GM12878 (cell line): ENCODE measurements at regions of chr7 and their contacts with region 1.

Region 1: DNA sequence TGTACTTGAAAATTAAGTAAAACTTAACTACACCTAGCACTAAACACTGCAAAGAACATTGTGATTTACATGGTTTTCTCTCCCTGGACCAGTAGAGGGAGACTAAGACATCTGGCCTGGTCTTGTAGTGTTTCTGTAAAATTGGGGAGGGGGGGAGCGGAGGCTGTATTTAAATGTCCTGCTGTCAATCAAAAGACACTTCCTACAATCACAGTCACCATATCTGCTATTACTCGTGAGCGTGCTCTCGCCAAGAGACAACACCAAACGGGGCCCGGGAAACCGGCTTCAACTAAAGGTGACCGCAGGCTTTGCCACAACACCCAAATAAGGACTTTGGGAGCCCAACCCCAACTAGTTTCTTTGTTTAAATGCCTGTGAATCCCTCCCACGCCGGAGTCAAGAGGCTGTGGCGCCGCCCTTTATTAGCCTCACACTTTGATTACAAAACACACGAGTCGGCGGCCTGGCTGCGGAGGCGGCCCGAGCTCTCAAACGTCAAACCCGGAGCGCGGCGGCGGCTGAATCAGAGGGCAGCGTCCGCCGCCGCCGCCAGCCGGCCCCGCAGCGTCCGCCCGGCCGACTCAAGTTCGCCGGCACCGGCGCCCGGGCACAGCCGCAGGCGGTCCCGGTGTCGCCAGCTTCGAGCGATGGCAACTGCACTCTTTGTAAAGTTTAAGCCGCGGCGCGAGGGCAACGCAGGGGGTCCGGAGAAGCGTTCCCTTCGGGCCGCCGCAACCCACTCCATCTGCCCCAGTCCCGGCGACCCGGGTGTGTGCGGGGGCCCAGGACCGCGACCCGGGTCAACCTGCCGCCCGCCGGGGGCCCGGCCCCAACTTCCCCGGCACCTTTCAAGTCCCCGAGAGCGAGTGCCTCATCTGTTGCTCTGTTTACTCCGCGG is 1.3 kb downstream of the KDM7A start:
- DNase-seq: peak; percentile 84
- ATAC-seq: peak; percentile 77
- H3K4me3 ChIP-seq: peak overlapping the region; percentile 77
- H3K27ac ChIP-seq: no peak overlapping the region
- H3K4me1 ChIP-seq: 0 out of 2 replicates have a peak, but pooled peaks cover 4% of the 10 kb centered on the region
- H3K27me3 ChIP-seq: peaks cover 0 to 4% of the 10 kb centered on the region in 2 experiments; a peak in 2 of 4 replicates
- CTCF ChIP-seq: peak; percentile 78 to 88 (median 85)
- EP300 ChIP-seq: no peak
- POLR2A ChIP-seq: peak; percentile 55
- RAD21 ChIP-seq: peak; percentile 97

Region 2: GRCh38 chr7:140010194-140010895 is 165.1 kb before region 1 on chr7:
- CTCF ChIA-PET with region 1: no interaction called
- POLR2A ChIA-PET with region 1: no interaction called
- RAD21 ChIA-PET with region 1: no interaction called
- SMC1A ChIA-PET with region 1: no interaction called
- in situ Hi-C with region 1: no loop called
- intact Hi-C with region 1: no loop called
- DNase-seq: no peak
- ATAC-seq: no peak
- H3K4me3 ChIP-seq: no peak overlapping the region
- H3K27ac ChIP-seq: no peak overlapping the region
- H3K4me1 ChIP-seq: no peaks in the 10 kb centered on the region
- H3K27me3 ChIP-seq: no peaks in the 10 kb centered on the region; a peak in 2 of 4 replicates
- CTCF ChIP-seq: no peak
- EP300 ChIP-seq: no peak
- POLR2A ChIP-seq: no peak
- RAD21 ChIP-seq: no peak

Region 3: GRCh38 chr7:140209866-140210609 is 34.6 kb after region 1 on chr7:
- CTCF ChIA-PET with region 1: interaction called, 3 read pairs
- POLR2A ChIA-PET with region 1: interaction called, 5 read pairs
- RAD21 ChIA-PET with region 1: interaction called, 5 read pairs
- SMC1A ChIA-PET with region 1: interaction called, 3 read pairs
- in situ Hi-C with region 1: no loop called
- intact Hi-C with region 1: loop called (anchors 1 kb)
- DNase-seq: peak; percentile 85
- ATAC-seq: peak; percentile 96
- H3K4me3 ChIP-seq: peak overlapping the region; percentile 24; the same call in 1 of the 2 replicates
- H3K27ac ChIP-seq: peak overlapping the region; percentile 78
- H3K4me1 ChIP-seq: peaks cover 58% of the 10 kb centered on the region
- H3K27me3 ChIP-seq: peaks cover 0 to 8% of the 10 kb centered on the region in 2 experiments
- CTCF ChIP-seq: no peak
- EP300 ChIP-seq: peak; percentile 75 to 95; a peak in 3 of 4 replicates
- POLR2A ChIP-seq: no peak; the same call in 1 of the 2 replicates
- RAD21 ChIP-seq: 0 out of 2 replicates have a peak, but pooled peaks have one; percentile 24

Region 4: DNA sequence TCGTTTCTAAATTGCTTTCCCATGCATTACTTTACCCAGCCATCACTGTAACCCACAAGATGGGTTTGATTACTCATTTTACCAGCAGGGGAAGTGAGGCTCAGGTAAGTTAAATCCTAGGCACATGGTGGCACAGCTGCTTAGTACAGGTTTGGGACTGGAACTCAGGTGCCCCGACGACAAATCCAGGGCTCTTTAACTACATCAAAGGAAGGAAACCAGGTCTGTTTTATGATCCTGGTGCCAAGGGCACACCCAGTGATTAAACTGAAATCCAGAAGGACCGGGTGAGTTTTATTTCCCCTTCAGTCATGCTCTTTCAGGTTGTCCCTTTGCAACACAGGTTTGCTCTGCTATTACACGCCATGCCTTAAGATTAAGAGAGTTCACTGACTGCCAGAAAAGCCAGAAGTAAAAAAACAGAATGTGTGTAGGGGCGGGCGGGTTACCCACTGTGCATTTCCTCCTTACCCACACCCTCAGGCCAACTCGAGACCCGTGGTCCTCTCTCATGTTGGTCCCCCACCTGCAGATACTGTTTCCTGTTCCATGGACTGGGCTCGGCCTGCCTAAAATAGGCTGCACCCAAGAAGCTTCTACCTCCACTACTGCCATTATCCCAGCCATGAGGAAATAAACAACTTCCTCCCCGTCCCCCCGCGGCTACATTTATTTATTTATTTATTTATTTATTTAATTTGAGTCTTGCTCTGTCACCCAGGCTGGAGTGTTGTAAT is 56.5 kb after region 1 on chr7:
- CTCF ChIA-PET with region 1: interaction called, 3 read pairs
- POLR2A ChIA-PET with region 1: no interaction called
- RAD21 ChIA-PET with region 1: no interaction called
- SMC1A ChIA-PET with region 1: no interaction called
- in situ Hi-C with region 1: no loop called
- intact Hi-C with region 1: loop called (anchors 2 kb)
- DNase-seq: no peak
- ATAC-seq: no peak
- H3K4me3 ChIP-seq: peak overlapping the region; percentile 62; the same call in 1 of the 2 replicates
- H3K27ac ChIP-seq: no peak overlapping the region
- H3K4me1 ChIP-seq: peaks cover 33% of the 10 kb centered on the region
- H3K27me3 ChIP-seq: peaks cover 5 to 10% of the 10 kb centered on the region in 2 experiments; a peak in 3 of 4 replicates
- CTCF ChIP-seq: no peak
- EP300 ChIP-seq: no peak
- POLR2A ChIP-seq: no peak
- RAD21 ChIP-seq: no peak

Region 5: GRCh38 chr7:140242057-140243031 is 66.9 kb after region 1 on chr7:
- CTCF ChIA-PET with region 1: no interaction called
- POLR2A ChIA-PET with region 1: no interaction called
- RAD21 ChIA-PET with region 1: no interaction called
- SMC1A ChIA-PET with region 1: no interaction called
- in situ Hi-C with region 1: no loop called
- intact Hi-C with region 1: loop called (anchors 1 kb)
- DNase-seq: peak; percentile 56
- ATAC-seq: peak; percentile 93
- H3K4me3 ChIP-seq: no peak overlapping the region
- H3K27ac ChIP-seq: no peak overlapping the region
- H3K4me1 ChIP-seq: peaks cover 13% of the 10 kb centered on the region
- H3K27me3 ChIP-seq: peaks cover 3 to 6% of the 10 kb centered on the region in 2 experiments; a peak in 3 of 4 replicates
- CTCF ChIP-seq: no peak
- EP300 ChIP-seq: no peak
- POLR2A ChIP-seq: no peak
- RAD21 ChIP-seq: no peak

Region 6: GRCh38 chr7:140275069-140275965 is 99.8 kb after region 1 on chr7:
- CTCF ChIA-PET with region 1: no interaction called
- POLR2A ChIA-PET with region 1: no interaction called
- RAD21 ChIA-PET with region 1: no interaction called
- SMC1A ChIA-PET with region 1: no interaction called
- in situ Hi-C with region 1: no loop called
- intact Hi-C with region 1: no loop called
- DNase-seq: no peak
- ATAC-seq: no peak
- H3K4me3 ChIP-seq: no peak overlapping the region
- H3K27ac ChIP-seq: no peak overlapping the region
- H3K4me1 ChIP-seq: no peaks in the 10 kb centered on the region
- H3K27me3 ChIP-seq: no peaks in the 10 kb centered on the region; a peak in 1 of 4 replicates
- CTCF ChIP-seq: no peak
- EP300 ChIP-seq: no peak
- POLR2A ChIP-seq: no peak
- RAD21 ChIP-seq: no peak

Region 7: DNA sequence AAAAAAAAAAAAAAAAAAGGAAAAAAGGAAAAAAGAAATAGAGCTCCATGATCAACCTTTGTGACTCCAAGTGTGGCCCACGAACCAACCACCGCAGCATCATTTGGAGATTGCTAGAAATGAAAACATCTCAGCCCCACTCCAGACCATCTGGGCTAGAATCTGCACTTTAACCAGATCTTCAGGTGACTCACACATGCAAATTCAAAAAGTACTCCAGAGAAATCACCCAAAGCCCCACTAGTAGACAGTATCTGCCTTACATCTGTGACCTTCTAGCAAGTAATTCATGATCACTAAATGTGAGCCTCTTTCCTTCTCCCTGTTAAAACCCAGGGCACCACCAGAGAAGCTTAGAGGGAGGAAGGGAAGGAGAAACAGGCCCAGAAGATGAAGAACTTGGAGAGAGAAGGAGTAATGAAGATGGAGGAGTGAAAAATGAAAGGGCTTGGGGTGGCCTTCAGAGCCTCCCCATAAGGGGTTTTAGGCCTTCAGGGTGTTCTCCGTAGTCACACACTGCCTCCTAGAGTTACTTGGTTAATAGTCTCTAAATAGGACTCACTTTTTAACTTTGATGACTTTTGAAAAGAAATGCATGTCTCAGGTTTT is 128.8 kb after region 1 on chr7:
- CTCF ChIA-PET with region 1: interaction called, 5 read pairs
- POLR2A ChIA-PET with region 1: no interaction called
- RAD21 ChIA-PET with region 1: no interaction called
- SMC1A ChIA-PET with region 1: interaction called, 7 read pairs
- in situ Hi-C with region 1: no loop called
- intact Hi-C with region 1: loop called (anchors 1 kb)
- DNase-seq: peak; percentile 11
- ATAC-seq: peak; percentile 81
- H3K4me3 ChIP-seq: no peak overlapping the region
- H3K27ac ChIP-seq: no peak overlapping the region
- H3K4me1 ChIP-seq: no peaks in the 10 kb centered on the region
- H3K27me3 ChIP-seq: no peaks in the 10 kb centered on the region; a peak in 2 of 4 replicates
- CTCF ChIP-seq: peak; percentile 33 to 54 (median 52); a peak in 4 of 6 replicates
- EP300 ChIP-seq: no peak
- POLR2A ChIP-seq: no peak
- RAD21 ChIP-seq: peak; percentile 69

Region 8: DNA sequence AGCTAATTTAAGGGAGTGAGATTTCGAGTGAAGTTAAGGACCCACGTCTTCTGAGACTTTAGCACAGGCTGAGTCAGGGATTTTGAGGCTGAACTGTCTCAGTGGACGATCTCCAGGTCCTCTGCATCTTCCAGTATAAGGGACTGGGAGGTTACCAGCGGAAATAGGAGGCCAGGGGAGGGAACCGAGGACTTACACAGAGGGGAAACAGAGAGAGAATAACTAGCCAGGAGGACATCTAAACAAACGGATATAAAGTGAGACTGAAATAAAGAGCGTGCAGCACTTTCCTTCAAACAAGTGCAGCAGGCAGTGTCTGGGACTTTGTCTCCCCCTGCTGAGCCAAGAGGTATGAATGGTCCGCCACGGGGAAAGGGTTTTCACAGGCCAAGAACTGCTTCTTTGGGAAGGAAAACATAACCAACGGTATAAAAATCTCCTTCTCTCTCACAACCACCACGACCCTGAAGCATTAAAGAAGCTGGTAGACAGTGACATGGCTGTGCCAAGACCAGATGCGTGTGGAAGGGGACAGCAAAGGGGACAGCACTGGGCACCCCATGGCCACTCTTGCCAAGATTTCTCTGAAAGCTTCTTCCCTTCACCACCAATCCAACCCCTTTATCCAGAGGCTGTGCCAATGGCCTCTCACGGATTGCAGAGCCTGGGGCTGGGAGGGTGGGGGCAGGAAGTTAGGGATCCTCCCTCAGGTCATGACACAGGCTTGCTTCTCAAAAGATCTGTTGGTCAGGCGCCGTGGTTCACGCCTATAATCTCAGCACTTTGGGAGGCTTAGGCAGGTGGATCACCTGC is 150.9 kb after region 1 on chr7:
- CTCF ChIA-PET with region 1: interaction called, 3 read pairs
- POLR2A ChIA-PET with region 1: no interaction called
- RAD21 ChIA-PET with region 1: interaction called, 3 read pairs
- SMC1A ChIA-PET with region 1: no interaction called
- in situ Hi-C with region 1: no loop called
- intact Hi-C with region 1: loop called (anchors 1 kb)
- DNase-seq: no peak
- ATAC-seq: peak; percentile 80
- H3K4me3 ChIP-seq: no peak overlapping the region
- H3K27ac ChIP-seq: no peak overlapping the region
- H3K4me1 ChIP-seq: no peaks in the 10 kb centered on the region
- H3K27me3 ChIP-seq: peaks cover 0 to 1% of the 10 kb centered on the region in 2 experiments; a peak in 1 of 4 replicates
- CTCF ChIP-seq: peak; percentile 62 to 68 (median 67); a peak in 5 of 6 replicates
- EP300 ChIP-seq: no peak
- POLR2A ChIP-seq: no peak
- RAD21 ChIP-seq: peak; percentile 84

Region 9: DNA sequence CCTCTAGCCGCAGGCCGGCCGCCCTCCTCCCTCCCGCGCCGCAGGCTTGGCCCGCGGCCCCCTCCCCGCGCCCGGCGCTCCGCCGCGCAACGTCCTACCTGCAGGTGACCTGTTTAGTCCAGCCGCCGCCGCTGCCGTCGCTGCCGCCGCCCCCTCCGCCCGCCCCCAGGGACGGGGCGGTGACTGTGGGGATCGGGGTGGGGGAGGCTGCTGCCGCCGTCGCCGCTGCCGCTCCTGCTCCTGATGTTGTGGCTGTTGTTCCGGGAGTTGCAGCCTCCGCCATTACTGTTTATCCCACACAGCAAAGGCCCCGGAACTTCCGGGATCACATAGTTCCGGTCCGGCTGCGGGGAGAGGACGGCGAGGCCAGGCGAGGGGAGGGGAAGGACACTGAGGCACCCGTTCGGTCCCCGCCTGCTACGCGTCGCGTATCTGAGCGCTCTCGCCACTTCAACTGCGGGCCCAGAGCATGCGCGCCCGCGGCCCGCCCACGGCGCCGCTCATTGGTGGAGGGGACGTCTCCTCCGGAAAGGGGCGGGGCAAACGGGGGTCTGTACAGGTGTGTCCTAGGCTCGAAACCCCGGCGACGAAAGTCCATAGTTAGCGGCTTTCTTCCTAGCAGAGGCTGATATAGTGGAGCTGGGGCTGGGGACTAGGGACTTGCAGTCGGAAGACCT is 303.7 kb after region 1 on chr7 and contains the start of gene MKRN1:
- CTCF ChIA-PET with region 1: interaction called, 3 read pairs
- POLR2A ChIA-PET with region 1: no interaction called
- RAD21 ChIA-PET with region 1: interaction called, 3 read pairs
- SMC1A ChIA-PET with region 1: no interaction called
- in situ Hi-C with region 1: no loop called
- intact Hi-C with region 1: loop called (anchors 5 kb)
- DNase-seq: peak; percentile 83
- ATAC-seq: peak; percentile 96
- H3K4me3 ChIP-seq: peak within 1 kb of the TSS; percentile 98
- H3K27ac ChIP-seq: peak within 1 kb of the TSS; percentile 76
- H3K4me1 ChIP-seq: peaks cover 13% of the 10 kb centered on the region
- H3K27me3 ChIP-seq: no peaks in the 10 kb centered on the region; a peak in 1 of 4 replicates
- CTCF ChIP-seq: no peak
- EP300 ChIP-seq: no peak
- POLR2A ChIP-seq: peak; percentile 85
- RAD21 ChIP-seq: no peak
- polyA plus RNA-seq, gene MKRN1: 19.1 to 23.8 TPM